ENCODE measurements at regions of chr15 and their contacts with region 1.

Region 1: DNA sequence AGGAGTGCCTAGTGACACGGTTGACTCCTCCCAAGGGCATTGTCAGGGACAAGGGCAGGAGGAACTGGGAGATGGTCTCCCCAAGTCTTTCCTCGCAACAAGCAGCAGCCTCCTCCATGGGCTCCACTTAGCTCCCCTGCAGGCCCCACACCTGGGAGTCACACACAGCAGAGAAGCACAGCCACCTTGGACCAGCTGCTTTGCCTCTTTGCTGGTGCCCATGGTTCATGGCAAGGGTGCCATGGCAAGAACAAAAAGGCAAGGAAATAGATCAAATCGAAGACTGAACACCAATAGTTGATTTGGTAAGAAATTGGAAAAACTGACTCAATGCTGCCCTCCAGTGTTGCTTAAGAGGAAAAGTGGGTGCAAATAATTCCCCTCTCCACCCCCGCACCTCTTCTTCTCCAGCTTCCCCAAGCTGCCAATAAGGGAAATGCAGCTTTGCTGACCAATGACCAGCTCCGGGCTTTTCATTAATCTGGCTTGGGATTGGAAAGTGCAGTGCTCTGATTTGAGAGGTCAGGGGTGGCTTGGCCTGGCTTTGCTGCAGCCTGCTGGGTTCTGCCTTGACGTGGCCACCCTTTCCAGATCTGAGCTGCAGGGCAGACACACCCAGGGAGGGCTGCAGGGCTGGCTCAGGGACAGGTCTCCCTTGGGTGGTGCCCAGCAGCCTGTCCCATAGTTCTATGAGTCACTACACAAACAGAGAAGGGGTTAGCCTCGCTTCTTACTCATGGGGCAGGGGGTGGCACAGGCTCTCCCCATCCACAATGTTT is 162.0 kb downstream of the KLF13 start:
- DNase-seq: peak; percentile 92
- H3K4me3 ChIP-seq: no peak overlapping the region
- H3K27ac ChIP-seq: no peak overlapping the region
- H3K4me1 ChIP-seq: peaks cover 3 to 10% of the 10 kb centered on the region in 2 experiments; a peak in 1 of 4 replicates
- H3K27me3 ChIP-seq: no peaks in the 10 kb centered on the region
- CTCF ChIP-seq: peak; percentile 84
- EP300 ChIP-seq: no peak
- RAD21 ChIP-seq: peak; percentile 89

Region 2: GRCh38 chr15:31206386-31206785 is 282.2 kb before region 1 on chr15:
- CTCF ChIA-PET with region 1: interaction called, 69 read pairs
- POLR2A ChIA-PET with region 1: interaction called, 3 read pairs
- DNase-seq: peak; percentile 52
- H3K4me3 ChIP-seq: no peak overlapping the region
- H3K27ac ChIP-seq: no peak overlapping the region
- H3K4me1 ChIP-seq: peaks cover 0 to 7% of the 10 kb centered on the region in 2 experiments; a peak in 1 of 4 replicates
- H3K27me3 ChIP-seq: peaks cover 8% of the 10 kb centered on the region; the same call in 1 of the 2 replicates
- CTCF ChIP-seq: peak; percentile 27; the same call in 1 of the 2 replicates
- EP300 ChIP-seq: no peak
- RAD21 ChIP-seq: peak; percentile 76

Region 3: DNA sequence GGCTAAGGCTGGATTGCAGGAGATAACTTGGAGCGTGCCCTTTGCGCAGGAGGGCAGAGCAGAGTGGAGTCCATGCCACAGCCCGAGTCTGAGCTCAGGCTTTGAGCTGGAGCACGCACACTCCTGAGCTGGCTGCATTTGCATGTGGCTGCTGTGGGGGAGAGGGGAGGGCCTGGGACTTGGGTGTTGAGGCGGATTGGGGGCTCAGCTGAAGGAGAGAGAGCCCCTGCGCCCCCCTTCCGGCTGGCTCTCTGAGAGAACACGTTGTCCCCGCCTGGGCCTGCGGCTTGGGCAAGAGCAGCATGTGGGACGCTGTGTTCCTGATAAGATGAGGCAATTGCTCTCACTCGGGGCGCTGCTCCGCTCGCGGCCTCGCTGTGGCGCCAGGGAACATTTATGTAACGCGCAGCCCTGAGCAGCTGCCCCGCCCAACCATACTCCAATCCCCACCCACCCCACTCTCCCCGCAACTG is 122.9 kb before region 1 on chr15:
- CTCF ChIA-PET with region 1: interaction called, 17 read pairs
- POLR2A ChIA-PET with region 1: no interaction called
- DNase-seq: peak; percentile 78
- H3K4me3 ChIP-seq: no peak overlapping the region
- H3K27ac ChIP-seq: 0 out of 4 replicates have a peak overlapping the region, but pooled peaks of 1 of the 2 experiments have one; percentile 30
- H3K4me1 ChIP-seq: peaks cover 0 to 65% of the 10 kb centered on the region in 2 experiments; a peak in 2 of 4 replicates
- H3K27me3 ChIP-seq: no peaks in the 10 kb centered on the region
- CTCF ChIP-seq: no peak
- EP300 ChIP-seq: no peak
- RAD21 ChIP-seq: peak; percentile 41

Region 4: GRCh38 chr15:31435261-31435911 is 53.2 kb before region 1 on chr15:
- CTCF ChIA-PET with region 1: interaction called, 67 read pairs
- POLR2A ChIA-PET with region 1: no interaction called
- DNase-seq: peak; percentile 91
- H3K4me3 ChIP-seq: no peak overlapping the region
- H3K27ac ChIP-seq: no peak overlapping the region; a peak in 1 of 4 replicates
- H3K4me1 ChIP-seq: peaks cover 0 to 20% of the 10 kb centered on the region in 2 experiments; a peak in 1 of 4 replicates
- H3K27me3 ChIP-seq: no peaks in the 10 kb centered on the region; the same call in 1 of the 2 replicates
- CTCF ChIP-seq: peak; percentile 66
- EP300 ChIP-seq: no peak
- RAD21 ChIP-seq: peak; percentile 94

Region 5: GRCh38 chr15:31465083-31465955 is 23.3 kb before region 1 on chr15:
- CTCF ChIA-PET with region 1: interaction called, 88 read pairs
- POLR2A ChIA-PET with region 1: no interaction called
- DNase-seq: no peak
- H3K4me3 ChIP-seq: no peak overlapping the region
- H3K27ac ChIP-seq: no peak overlapping the region
- H3K4me1 ChIP-seq: no peaks in the 10 kb centered on the region
- H3K27me3 ChIP-seq: peaks cover 5% of the 10 kb centered on the region; the same call in 1 of the 2 replicates
- CTCF ChIP-seq: no peak
- EP300 ChIP-seq: no peak
- RAD21 ChIP-seq: no peak

Region 6: DNA sequence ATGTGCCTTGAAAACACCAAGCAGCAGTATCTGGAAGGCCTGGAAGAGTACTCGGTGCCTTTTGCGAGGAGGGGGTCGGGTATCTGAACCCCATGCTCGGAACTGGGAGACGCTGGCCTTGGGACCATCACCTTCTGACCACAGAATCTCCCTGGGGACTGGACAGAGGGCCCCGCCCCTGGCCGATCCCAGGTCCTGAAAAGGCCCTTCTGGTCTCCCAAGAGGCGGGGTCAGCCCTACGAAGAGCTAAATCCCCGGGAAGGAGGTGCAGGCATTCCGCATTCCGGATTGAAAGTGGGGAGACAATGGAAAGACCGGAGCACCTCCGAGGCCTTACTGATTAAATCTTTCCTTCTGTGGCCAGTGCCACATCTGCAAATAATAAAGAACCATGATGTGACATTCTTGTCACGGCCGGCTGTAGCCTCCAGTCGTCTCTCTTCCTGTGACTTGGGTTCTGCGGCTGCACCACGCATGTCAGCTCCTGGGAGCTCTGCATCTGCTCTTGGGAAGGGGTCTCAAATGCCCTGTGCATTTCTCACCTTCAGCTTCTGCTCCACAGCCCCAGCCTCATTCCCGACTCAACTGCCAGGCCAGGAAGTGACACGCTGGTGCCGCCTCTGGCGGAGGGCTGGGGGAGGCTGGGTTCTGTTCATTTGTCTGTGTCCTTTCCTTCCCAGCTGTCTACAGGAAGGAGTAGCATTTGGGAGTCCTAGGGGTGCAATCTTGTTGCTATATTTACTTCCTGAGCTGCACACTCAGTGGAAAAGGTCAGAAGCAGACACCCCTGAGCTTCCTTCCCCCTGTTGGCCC is 11.5 kb after region 1 on chr15:
- CTCF ChIA-PET with region 1: interaction called, 26 read pairs
- POLR2A ChIA-PET with region 1: no interaction called
- DNase-seq: peak; percentile 58
- H3K4me3 ChIP-seq: no peak overlapping the region
- H3K27ac ChIP-seq: peak overlapping the region in 1 of 2 experiments; percentile 48; a peak in 2 of 4 replicates
- H3K4me1 ChIP-seq: peaks cover 0 to 21% of the 10 kb centered on the region in 2 experiments; a peak in 2 of 4 replicates
- H3K27me3 ChIP-seq: no peaks in the 10 kb centered on the region
- CTCF ChIP-seq: no peak
- EP300 ChIP-seq: no peak
- RAD21 ChIP-seq: no peak

Measured in SK-N-SH (cell line).